GM12878 (cell line): ENCODE measurements at regions of chr9 and their contacts with region 1.

Region 1: DNA sequence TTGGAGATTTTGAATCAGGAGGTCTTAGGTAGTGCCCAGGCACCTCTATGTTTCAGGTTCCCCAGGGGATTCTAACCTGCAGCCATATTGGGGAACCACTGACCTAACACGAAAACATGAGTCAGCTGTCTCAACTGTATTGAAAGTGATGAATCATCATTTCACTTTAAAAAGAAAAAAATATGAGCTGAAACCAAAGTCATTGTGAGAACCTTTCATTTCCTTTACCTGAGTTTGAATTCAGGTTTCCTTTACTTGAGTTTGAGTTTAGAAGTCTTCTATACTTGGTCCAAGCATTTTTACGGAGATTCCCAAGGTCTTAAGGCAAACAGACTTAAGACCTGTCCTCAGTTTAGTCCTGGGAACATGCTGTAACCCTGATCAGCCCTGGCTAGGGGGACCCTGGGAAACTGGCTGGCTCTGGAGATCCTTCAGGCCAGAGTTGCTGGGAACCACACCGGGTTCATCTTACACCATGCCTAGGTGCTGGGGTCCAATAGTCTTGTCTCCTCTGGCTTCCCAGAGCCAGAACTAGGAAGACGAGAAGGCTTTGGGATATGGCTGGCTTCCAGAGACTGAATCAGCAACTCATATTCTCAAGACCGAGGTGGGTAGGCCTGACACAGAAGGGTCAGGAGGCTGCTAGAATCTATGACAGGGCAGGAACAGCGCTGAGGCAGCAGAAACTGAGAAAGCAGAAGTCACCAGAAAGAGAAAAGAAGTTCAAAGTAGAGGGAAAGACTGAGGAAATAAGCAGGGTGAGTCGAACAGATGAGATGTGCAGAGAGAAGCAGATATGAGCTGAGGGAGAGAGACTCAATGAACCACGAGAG is 16.4 kb upstream of the PDCD1LG2 start:
- DNase-seq: peak; percentile 96
- ATAC-seq: peak; percentile 91
- H3K4me3 ChIP-seq: peak overlapping the region; percentile 30; the same call in 1 of the 2 replicates
- H3K27ac ChIP-seq: peak overlapping the region; percentile 92
- H3K4me1 ChIP-seq: peaks cover 16% of the 10 kb centered on the region
- H3K27me3 ChIP-seq: no peaks in the 10 kb centered on the region
- CTCF ChIP-seq: no peak
- EP300 ChIP-seq: peak in 1 of 2 experiments; percentile 65; a peak in 1 of 4 replicates
- POLR2A ChIP-seq: peak; percentile 63
- RAD21 ChIP-seq: 0 out of 2 replicates have a peak, but pooled peaks have one; percentile 9

Region 2: GRCh38 chr9:4661165-4661564 is 832.7 kb before region 1 on chr9:
- CTCF ChIA-PET with region 1: no interaction called
- POLR2A ChIA-PET with region 1: no interaction called
- RAD21 ChIA-PET with region 1: no interaction called
- SMC1A ChIA-PET with region 1: no interaction called
- in situ Hi-C with region 1: no loop called
- intact Hi-C with region 1: no loop called
- DNase-seq: no peak
- ATAC-seq: no peak
- H3K4me3 ChIP-seq: 0 out of 2 replicates have a peak overlapping the region, but pooled peaks have one; percentile 85
- H3K27ac ChIP-seq: no peak overlapping the region
- H3K4me1 ChIP-seq: peaks cover 21% of the 10 kb centered on the region
- H3K27me3 ChIP-seq: no peaks in the 10 kb centered on the region
- CTCF ChIP-seq: no peak
- EP300 ChIP-seq: no peak
- POLR2A ChIP-seq: no peak
- RAD21 ChIP-seq: no peak

Region 3: DNA sequence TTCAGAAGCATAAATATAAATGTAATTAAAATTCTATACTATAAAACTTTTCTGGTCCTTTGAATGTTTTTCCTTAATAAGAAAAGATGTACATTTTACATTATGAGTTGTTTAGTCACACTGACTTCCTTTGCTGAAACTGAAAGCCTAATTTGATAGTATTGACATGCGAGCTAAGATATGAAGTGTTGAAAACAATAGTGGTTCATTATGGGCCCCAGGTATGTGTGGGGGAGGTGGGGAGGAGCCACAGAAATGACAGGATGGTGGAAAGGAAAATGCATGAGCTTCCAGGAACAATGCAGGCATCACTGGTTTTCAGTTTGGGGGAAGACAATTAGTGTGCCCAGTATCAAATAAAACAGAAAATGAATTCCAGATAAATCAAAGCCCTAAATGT is 118.8 kb before region 1 on chr9:
- CTCF ChIA-PET with region 1: no interaction called
- POLR2A ChIA-PET with region 1: no interaction called
- RAD21 ChIA-PET with region 1: no interaction called
- SMC1A ChIA-PET with region 1: no interaction called
- in situ Hi-C with region 1: no loop called
- intact Hi-C with region 1: no loop called
- DNase-seq: no peak
- ATAC-seq: peak; percentile 98
- H3K4me3 ChIP-seq: no peak overlapping the region
- H3K27ac ChIP-seq: no peak overlapping the region
- H3K4me1 ChIP-seq: no peaks in the 10 kb centered on the region
- H3K27me3 ChIP-seq: no peaks in the 10 kb centered on the region
- CTCF ChIP-seq: no peak
- EP300 ChIP-seq: 0 out of 4 replicates have a peak, but pooled peaks of 1 of the 2 experiments have one; percentile 45
- POLR2A ChIP-seq: no peak
- RAD21 ChIP-seq: no peak

Region 4: DNA sequence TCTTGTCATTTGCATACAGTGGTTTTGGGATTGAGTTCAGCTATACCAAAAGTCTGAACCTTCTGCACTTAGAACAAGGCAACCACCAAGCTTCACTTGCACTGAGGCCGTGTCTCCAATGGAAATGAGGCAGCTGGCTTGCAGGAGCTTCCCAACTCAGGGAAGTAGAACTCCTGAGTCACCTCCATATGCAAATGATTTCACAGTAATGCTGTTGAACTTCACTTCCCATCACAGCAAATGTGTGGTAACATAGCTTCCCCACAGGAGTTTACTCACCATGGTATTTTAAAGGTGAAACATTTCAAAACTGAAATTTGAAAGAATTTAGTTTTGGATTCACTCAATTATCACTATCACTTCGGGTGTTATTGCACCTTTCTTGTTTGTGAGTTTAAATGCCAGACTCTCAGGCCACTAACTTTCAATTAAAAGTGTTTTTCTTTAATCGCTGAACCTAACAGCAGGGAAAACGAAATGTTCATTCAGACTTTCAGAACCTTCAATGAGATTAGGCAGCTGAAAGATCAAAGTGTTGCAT is 34.5 kb before region 1 on chr9:
- CTCF ChIA-PET with region 1: interaction called, 4 read pairs
- POLR2A ChIA-PET with region 1: interaction called, 5 read pairs
- RAD21 ChIA-PET with region 1: interaction called, 18 read pairs
- SMC1A ChIA-PET with region 1: interaction called, 74 read pairs
- in situ Hi-C with region 1: no loop called
- intact Hi-C with region 1: loop called (anchors 2 kb)
- DNase-seq: no peak
- ATAC-seq: peak; percentile 55
- H3K4me3 ChIP-seq: peak overlapping the region; percentile 35
- H3K27ac ChIP-seq: peak overlapping the region; percentile 81
- H3K4me1 ChIP-seq: peaks cover 32% of the 10 kb centered on the region
- H3K27me3 ChIP-seq: no peaks in the 10 kb centered on the region
- CTCF ChIP-seq: no peak
- EP300 ChIP-seq: peak; percentile 69 to 84; a peak in 2 of 4 replicates
- POLR2A ChIP-seq: no peak
- RAD21 ChIP-seq: no peak

Region 5: GRCh38 chr9:5566054-5566618 is 72.2 kb after region 1 on chr9:
- CTCF ChIA-PET with region 1: no interaction called
- POLR2A ChIA-PET with region 1: interaction called, 7 read pairs
- RAD21 ChIA-PET with region 1: interaction called, 8 read pairs
- SMC1A ChIA-PET with region 1: interaction called, 18 read pairs
- in situ Hi-C with region 1: no loop called
- intact Hi-C with region 1: no loop called
- DNase-seq: peak; percentile 91
- ATAC-seq: peak; percentile 91
- H3K4me3 ChIP-seq: no peak overlapping the region
- H3K27ac ChIP-seq: peak overlapping the region; percentile 80
- H3K4me1 ChIP-seq: peaks cover 39% of the 10 kb centered on the region
- H3K27me3 ChIP-seq: no peaks in the 10 kb centered on the region
- CTCF ChIP-seq: no peak
- EP300 ChIP-seq: 0 out of 4 replicates have a peak, but pooled peaks of 1 of the 2 experiments have one; percentile 49
- POLR2A ChIP-seq: no peak
- RAD21 ChIP-seq: no peak